ENCODE measurements at regions of chr11 and their contacts with region 1.

Region 1: GRCh38 chr11:2208691-2209369 is 37.2 kb upstream of the TH start:
- DNase-seq: no peak
- H3K27ac ChIP-seq: peak overlapping the region; percentile 72
- CTCF ChIP-seq: peak; percentile 45

Region 2: DNA sequence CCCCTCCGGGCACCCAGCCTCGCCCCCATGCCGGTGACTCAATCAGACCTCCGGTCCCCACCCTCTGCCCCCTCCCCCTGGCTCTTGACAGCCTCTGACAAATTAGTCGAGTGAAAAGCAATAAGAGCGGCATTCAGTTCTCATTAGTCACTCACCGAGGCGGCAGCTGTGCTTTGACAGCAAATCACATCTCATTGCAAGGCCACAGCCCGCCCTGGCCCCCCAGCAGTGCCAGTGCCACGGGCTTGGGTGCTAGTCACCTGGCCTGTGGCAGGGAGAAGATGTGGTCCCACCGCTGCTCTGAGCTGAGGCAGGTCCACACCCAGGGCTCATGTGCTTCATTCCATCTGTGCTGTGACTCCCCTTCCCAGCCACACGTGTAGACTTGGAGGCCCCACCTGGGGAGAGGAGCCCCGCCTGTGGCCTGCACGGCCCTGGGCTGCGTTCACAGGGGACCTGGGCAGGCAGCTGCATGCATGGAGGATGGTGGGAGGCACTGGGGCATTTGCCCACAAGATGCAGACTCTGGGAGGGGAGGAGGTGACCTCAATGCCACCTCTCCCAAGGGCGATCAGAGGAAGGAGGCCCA is 29.8 kb before region 1 on chr11:
- CTCF ChIA-PET with region 1: no interaction called
- POLR2A ChIA-PET with region 1: no interaction called
- DNase-seq: peak; percentile 92
- H3K27ac ChIP-seq: peak overlapping the region; percentile 99
- CTCF ChIP-seq: no peak

Region 3: DNA sequence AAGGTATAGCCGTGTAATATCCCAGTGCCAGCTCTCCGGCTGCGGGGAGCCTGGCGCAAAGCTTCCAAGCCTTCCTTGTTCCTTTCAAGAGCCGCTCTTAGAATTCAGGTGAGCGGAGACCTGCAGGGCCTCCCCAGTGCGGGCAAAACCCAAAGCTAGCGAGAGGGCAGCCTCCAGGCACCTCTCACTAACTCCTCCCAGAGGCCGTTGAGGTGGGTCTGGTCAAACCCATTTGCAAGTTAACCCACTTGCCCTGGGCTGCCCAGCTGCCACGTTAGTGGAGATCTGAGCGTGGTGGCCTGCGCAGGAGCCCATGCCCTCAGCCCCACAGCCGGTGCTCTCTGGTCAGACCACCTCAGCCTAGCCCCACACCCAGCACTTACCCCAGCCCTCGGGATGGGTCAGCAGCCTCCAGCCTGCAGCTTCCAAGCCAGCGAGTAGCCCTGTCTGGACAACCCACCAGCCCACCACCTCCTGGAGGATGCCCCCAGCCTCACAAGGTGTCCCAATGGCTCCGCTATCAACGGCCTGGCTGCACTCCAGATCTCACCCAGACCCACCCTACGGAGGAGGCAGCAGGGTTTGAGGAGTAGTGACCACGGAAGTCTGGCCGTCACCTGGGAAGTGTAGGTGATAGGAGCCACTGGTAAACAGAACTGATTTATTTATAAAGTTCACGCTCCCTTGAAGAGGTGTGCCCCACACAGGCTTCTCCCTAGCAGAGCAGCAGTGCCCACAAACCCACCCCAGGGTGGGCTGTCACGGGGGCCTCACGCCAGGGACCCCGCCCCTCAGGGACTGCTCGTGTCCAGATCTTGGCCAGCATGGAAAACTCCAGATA is 59.2 kb after region 1 on chr11:
- CTCF ChIA-PET with region 1: interaction called, 10 read pairs
- POLR2A ChIA-PET with region 1: interaction called, 3 read pairs
- DNase-seq: no peak
- H3K27ac ChIP-seq: peak overlapping the region; percentile 89
- CTCF ChIP-seq: no peak

Region 4: GRCh38 chr11:2298795-2299761 is 90.2 kb after region 1 on chr11:
- CTCF ChIA-PET with region 1: interaction called, 11 read pairs
- POLR2A ChIA-PET with region 1: no interaction called
- DNase-seq: peak; percentile 57
- H3K27ac ChIP-seq: no peak overlapping the region
- CTCF ChIP-seq: peak; percentile 31

Region 5: GRCh38 chr11:2305140-2305840 is 96.5 kb after region 1 on chr11:
- CTCF ChIA-PET with region 1: interaction called, 10 read pairs
- POLR2A ChIA-PET with region 1: no interaction called
- DNase-seq: peak; percentile 53
- H3K27ac ChIP-seq: peak overlapping the region; percentile 81
- CTCF ChIP-seq: peak; percentile 77

Measured in RWPE1 (cell line).